Dendritic cell treated with granulocyte-macrophage colony-stimulating factor and Interleukin-4, amounts not matched to agents 40 ng/mL and 50 ng/mL, for 4 days (primary cell): ENCODE measurements at regions of chr13 and their contacts with region 1.

Region 1: GRCh38 chr13:81017513-81018152 is 676.7 kb upstream of the SPRY2 start:
- H3K4me3 Mint-ChIP-seq: no peak overlapping the region
- H3K27ac Mint-ChIP-seq: no peak overlapping the region
- H3K4me1 Mint-ChIP-seq: no peaks in the 10 kb centered on the region
- H3K27me3 Mint-ChIP-seq: no peaks in the 10 kb centered on the region

Region 2: GRCh38 chr13:79679334-79679733 is 1338.3 kb before region 1 on chr13:
- intact Hi-C with region 1: loop called (anchors 1 kb)
- H3K4me3 Mint-ChIP-seq: no peak overlapping the region
- H3K27ac Mint-ChIP-seq: no peak overlapping the region
- H3K4me1 Mint-ChIP-seq: no peaks in the 10 kb centered on the region
- H3K27me3 Mint-ChIP-seq: no peaks in the 10 kb centered on the region

Region 3: DNA sequence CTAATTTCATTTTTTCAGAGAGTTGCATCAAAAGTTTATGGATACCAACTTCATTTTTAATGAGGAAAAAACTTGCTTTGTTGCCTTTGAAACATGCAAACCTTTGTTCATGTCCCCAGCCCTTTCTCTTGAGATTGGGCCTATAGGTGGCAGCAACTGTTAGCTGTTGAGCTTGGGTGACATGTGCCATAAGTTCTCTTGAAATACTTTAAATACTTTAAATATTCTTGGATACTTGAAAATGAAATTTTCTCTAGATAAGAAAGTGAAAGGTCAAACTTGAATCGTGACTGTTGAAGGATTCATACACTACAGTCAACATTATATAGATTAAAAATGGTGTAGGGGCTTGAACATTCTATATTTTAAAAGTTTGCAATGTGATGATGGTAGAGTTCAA is 1241.8 kb before region 1 on chr13:
- intact Hi-C with region 1: loop called (anchors 10 kb)
- H3K4me3 Mint-ChIP-seq: no peak overlapping the region
- H3K27ac Mint-ChIP-seq: no peak overlapping the region
- H3K4me1 Mint-ChIP-seq: peaks cover 12% of the 10 kb centered on the region
- H3K27me3 Mint-ChIP-seq: no peaks in the 10 kb centered on the region

Region 4: DNA sequence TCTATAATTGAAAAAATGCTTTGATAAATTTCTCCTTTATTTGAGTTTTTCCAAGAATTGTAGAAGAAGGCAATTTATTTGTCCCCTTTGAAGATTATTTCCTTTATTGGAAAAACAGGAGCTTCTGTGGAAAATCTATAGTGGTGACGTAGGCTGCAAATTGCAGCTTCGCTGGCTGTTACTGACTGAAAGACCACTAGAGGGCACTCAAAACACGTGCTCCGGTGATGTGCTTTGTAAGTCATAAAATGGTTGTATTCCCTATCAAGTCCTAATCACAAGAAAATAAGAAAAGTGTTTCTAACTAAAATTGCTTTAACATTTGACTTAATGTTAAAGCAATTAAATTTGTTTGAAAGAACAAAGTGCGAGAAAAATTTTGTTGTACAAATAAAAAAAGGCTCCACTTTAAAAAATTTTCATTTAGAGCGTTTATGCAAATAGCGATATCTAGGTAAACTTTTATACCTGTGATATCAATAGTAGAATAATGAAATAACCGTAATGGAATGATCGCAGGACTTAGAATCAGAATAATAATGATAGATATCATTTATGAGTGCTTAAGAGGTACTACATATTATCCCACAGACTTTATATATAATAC is 38.5 kb before region 1 on chr13:
- intact Hi-C with region 1: loop called (anchors 1 kb)
- H3K4me3 Mint-ChIP-seq: no peak overlapping the region
- H3K27ac Mint-ChIP-seq: no peak overlapping the region
- H3K4me1 Mint-ChIP-seq: no peaks in the 10 kb centered on the region
- H3K27me3 Mint-ChIP-seq: no peaks in the 10 kb centered on the region

Region 5: GRCh38 chr13:81089371-81090157 is 71.9 kb after region 1 on chr13:
- intact Hi-C with region 1: no loop called
- H3K4me3 Mint-ChIP-seq: no peak overlapping the region
- H3K27ac Mint-ChIP-seq: no peak overlapping the region
- H3K4me1 Mint-ChIP-seq: no peaks in the 10 kb centered on the region
- H3K27me3 Mint-ChIP-seq: no peaks in the 10 kb centered on the region

Region 6: GRCh38 chr13:81596224-81596753 is 578.7 kb after region 1 on chr13:
- intact Hi-C with region 1: no loop called
- H3K4me3 Mint-ChIP-seq: no peak overlapping the region
- H3K27ac Mint-ChIP-seq: no peak overlapping the region
- H3K4me1 Mint-ChIP-seq: no peaks in the 10 kb centered on the region
- H3K27me3 Mint-ChIP-seq: no peaks in the 10 kb centered on the region